ENCODE measurements at regions of chr9 and their contacts with region 1.

Region 1: DNA sequence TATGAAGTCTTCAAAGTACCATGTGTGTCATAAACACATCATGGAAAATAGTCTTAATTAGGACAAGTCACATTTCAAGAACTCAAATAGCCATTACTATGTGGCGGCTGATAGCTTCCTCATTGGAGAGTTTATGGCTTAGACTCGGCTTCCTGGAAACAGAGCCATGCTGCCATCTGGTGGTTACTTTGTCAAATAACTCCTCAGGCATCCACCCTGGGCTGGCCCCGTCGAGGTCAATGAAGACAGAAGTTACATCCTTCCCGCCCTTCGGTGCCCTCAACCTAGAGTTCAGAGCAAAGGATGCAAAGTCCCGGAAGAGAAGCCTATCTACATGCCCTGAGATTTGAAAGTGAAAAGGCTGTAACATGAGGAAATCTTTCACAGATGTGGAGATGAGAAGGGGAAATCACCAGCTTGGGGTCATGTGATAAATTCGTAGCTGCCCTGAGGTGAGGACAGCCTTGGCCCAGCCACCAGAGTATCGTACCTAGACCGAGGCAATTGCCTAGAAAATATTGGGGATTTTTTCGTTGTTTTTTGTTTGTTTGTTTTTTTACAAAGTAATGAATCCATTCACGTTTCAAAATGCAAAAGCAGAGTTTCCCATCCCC is 45.5 kb upstream of the ZNF169 start:
- DNase-seq: peak; percentile 32 to 92 (median 70)

Region 2: GRCh38 chr9:93682232-93682968 is 531.2 kb before region 1 on chr9:
- intact Hi-C with region 1: loop called (anchors 2 kb)
- DNase-seq: peak in 9 of 10 donors; percentile 47 to 94 (median 75)

Region 3: GRCh38 chr9:93962561-93963440 is 250.8 kb before region 1 on chr9:
- intact Hi-C with region 1: loop called (anchors 1 kb)
- DNase-seq: peak; percentile 28 to 95 (median 76)

Region 4: GRCh38 chr9:94014065-94014654 is 199.5 kb before region 1 on chr9:
- intact Hi-C with region 1: loop called (anchors 2 kb)
- DNase-seq: no peak

Region 5: GRCh38 chr9:94065535-94065961 is 148.1 kb before region 1 on chr9:
- intact Hi-C with region 1: loop called (anchors 1 kb)
- DNase-seq: peak in 8 of 10 donors; percentile 32 to 91 (median 77)

Region 6: DNA sequence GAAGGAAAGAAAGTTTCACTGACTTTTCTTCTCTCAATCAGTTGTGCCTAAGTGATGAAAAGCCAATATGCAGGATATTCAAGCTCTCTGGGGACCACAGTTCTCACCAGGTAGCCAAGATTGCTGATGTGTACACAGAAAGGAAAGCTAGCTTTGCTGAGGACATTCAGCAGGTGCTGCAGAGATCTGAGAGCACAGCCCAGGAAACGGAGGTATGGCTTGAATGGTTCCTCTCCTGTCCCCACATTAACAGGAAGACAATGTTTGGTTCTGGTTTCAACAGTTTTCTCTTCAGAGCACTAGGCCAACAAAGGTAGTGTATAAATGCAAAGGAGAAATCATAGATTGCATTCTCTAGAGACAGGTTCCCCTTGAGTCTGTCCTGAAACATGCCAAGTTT is 59.7 kb before region 1 on chr9:
- intact Hi-C with region 1: no loop called
- DNase-seq: no peak

Region 7: DNA sequence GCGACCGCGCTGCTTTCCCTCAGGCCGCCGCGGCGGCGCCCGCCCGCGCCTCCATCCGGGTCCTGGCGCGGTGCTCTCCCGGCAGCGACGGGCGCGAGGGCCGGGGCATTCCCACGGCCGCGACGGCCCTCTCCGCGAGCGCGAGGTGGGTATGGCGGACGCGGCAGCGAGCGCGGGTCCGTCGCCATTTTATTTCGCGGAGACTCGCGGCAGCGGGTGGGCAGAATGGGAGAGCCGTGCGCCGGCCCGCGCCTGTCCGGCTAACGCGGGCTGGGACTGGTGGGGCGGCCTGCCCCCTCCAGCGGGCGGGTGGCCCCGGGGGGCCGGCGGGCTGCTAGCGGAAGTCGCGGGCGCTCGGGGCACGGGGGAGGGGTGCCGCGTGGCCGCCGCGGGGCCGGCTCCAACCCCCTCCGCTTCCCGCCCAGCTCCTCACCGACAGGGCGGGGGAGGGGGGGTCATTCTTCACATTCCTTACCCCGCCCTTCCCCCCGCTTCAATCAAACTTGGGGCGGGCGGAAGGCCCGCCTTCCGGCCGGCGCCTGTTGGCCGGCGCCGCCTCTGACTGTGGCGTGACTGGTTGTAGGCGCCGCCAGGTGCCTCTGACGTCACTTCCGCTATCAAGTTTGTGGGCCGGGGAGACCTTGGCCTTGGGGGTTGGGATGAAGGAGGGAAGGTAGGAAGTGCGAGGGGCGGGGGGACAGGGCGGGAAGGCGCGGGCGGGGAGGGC is 47.2 kb before region 1 on chr9:
- intact Hi-C with region 1: loop called (anchors 2 kb)
- DNase-seq: peak; percentile 91 to 99 (median 94)

Region 8: GRCh38 chr9:94464790-94465189 is 251.2 kb after region 1 on chr9:
- intact Hi-C with region 1: no loop called
- DNase-seq: no peak